Activated T-helper 2 cell treated with anti-CD3 and anti-CD28 coated beads, Interferon-gamma antibody, Interleukin-2, Interleukin-4, amounts not matched to agents 10 μg/mL and 5 μg/mL and 100 μg/mL, durations not matched to agents 14 hours and 24 hours and 36 hours (primary cell): ENCODE measurements at regions of chr4 and their contacts with region 1.

Region 1: GRCh38 chr4:56435306-56435926 is at the start of gene PPAT:
- DNase-seq: peak; percentile 97
- H3K4me3 Mint-ChIP-seq: peak within 1 kb of the TSS; percentile 98
- H3K27ac Mint-ChIP-seq: peak within 1 kb of the TSS; percentile 98
- H3K4me1 Mint-ChIP-seq: peaks cover 44% of the 10 kb centered on the region
- H3K27me3 Mint-ChIP-seq: no peaks in the 10 kb centered on the region
- total RNA-seq, gene PPAT: 43.4 and 46.2 TPM in 2 replicates

Region 2: GRCh38 chr4:56387023-56388001 is 48.1 kb before region 1 on chr4 and contains the start of gene AASDH:
- intact Hi-C with region 1: loop called (anchors 1 kb)
- DNase-seq: peak; percentile 91
- H3K4me3 Mint-ChIP-seq: peak within 1 kb of the TSS; percentile 92
- H3K27ac Mint-ChIP-seq: peak within 1 kb of the TSS; percentile 98
- H3K4me1 Mint-ChIP-seq: peaks cover 25% of the 10 kb centered on the region
- H3K27me3 Mint-ChIP-seq: no peaks in the 10 kb centered on the region
- total RNA-seq, gene AASDH: 10.4 and 15.4 TPM in 2 replicates

Region 3: DNA sequence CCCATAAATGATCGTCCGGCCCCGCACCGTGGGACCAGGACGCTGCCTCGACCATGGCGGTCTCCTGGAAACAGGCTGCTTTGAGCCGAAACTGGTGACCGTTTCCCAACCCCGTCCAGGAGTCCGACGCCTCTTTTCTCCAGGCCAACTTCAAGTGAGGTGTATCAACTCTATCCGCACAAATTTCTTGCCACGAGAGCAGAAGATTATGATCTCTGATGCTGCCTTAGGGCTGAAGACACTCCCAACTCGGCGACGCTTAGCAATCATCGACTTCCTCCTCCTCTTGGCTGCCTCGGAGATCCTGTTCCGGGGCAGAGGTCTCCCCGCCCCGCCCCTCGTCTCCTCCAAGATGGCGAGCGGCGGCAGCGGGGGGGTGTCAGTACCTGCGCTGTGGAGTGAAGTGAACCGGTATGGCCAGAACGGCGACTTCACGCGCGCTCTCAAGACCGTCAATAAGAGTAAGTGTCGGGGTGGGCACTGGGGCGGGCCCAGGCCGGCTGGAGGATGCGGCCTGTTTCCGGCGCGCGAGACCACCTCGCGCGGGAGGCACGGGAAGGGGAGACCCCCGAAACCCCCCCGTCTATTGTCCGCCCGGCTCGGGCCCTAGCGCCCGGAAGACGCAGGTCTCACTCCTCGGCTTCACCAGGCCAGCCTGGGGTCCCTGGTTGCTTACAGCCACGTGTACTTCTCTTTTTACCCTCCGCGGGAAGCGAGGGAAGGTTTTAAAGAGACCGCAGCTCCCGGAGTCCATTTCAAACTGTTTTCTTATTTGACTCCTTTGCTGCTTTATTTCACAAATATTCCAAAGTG is 32.1 kb after region 1 on chr4 and contains the start of gene SRP72:
- intact Hi-C with region 1: loop called (anchors 1 kb)
- DNase-seq: peak; percentile 87
- H3K4me3 Mint-ChIP-seq: peak within 1 kb of the TSS; percentile 100
- H3K27ac Mint-ChIP-seq: peak within 1 kb of the TSS; percentile 100
- H3K4me1 Mint-ChIP-seq: peaks cover 38% of the 10 kb centered on the region
- H3K27me3 Mint-ChIP-seq: no peaks in the 10 kb centered on the region
- total RNA-seq, gene SRP72: 187 and 191 TPM in 2 replicates

Region 4: DNA sequence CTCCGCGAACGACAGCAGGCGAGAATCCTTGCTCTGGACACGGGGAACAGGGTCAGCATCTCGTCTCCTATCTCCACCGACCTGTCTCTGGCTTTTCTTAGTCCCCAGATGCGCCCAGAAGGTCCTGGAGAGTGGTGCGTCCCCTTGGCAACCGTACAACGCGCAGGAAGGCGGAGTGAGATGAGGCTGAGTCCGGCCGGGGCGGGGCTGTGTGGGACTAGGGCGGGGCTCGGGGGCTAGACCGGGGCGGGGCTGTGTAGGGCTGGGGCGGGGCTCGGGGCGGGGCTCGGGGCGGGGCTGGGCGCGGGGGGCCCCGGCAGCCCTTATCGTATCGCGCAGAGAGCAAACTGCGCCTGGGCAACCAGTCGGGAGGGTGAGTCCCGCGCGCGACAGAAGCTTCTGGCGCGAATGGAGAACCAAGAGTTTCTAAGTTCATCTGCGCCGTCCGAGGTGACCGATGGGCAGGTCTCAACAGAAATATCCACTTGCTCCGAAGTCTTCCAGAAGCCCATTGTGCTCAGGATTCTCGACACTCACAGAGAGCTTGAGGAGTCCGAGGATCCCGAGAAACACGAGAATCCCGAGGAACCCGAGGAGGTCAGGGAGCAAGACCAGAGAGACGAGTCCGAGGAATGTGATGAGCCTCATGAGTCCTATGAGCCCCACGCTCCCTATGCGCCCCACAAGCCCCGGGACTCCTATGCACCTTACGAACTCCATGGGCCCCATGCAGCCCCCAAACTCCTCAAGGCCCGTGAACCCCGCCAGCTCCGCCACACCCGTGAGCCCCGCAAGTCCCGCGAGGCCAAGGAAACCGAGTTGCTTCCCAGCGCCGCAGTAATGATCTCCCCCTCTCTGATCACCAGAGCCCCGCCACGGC is 95.1 kb after region 1 on chr4:
- intact Hi-C with region 1: loop called (anchors 1 kb)
- DNase-seq: peak; percentile 64
- H3K4me3 Mint-ChIP-seq: no peak overlapping the region
- H3K27ac Mint-ChIP-seq: no peak overlapping the region
- H3K4me1 Mint-ChIP-seq: no peaks in the 10 kb centered on the region
- H3K27me3 Mint-ChIP-seq: peaks cover 32% of the 10 kb centered on the region

Region 5: GRCh38 chr4:56641494-56642051 is 206.2 kb after region 1 on chr4:
- intact Hi-C with region 1: no loop called
- DNase-seq: no peak
- H3K4me3 Mint-ChIP-seq: no peak overlapping the region
- H3K27ac Mint-ChIP-seq: peak overlapping the region; percentile 36
- H3K4me1 Mint-ChIP-seq: peaks cover 26% of the 10 kb centered on the region
- H3K27me3 Mint-ChIP-seq: peaks cover 1% of the 10 kb centered on the region

Region 6: GRCh38 chr4:56843421-56843899 is 408.0 kb after region 1 on chr4:
- intact Hi-C with region 1: loop called (anchors 5 kb)
- DNase-seq: no peak
- H3K4me3 Mint-ChIP-seq: no peak overlapping the region
- H3K27ac Mint-ChIP-seq: no peak overlapping the region
- H3K4me1 Mint-ChIP-seq: no peaks in the 10 kb centered on the region
- H3K27me3 Mint-ChIP-seq: peaks cover 3% of the 10 kb centered on the region

Region 7: DNA sequence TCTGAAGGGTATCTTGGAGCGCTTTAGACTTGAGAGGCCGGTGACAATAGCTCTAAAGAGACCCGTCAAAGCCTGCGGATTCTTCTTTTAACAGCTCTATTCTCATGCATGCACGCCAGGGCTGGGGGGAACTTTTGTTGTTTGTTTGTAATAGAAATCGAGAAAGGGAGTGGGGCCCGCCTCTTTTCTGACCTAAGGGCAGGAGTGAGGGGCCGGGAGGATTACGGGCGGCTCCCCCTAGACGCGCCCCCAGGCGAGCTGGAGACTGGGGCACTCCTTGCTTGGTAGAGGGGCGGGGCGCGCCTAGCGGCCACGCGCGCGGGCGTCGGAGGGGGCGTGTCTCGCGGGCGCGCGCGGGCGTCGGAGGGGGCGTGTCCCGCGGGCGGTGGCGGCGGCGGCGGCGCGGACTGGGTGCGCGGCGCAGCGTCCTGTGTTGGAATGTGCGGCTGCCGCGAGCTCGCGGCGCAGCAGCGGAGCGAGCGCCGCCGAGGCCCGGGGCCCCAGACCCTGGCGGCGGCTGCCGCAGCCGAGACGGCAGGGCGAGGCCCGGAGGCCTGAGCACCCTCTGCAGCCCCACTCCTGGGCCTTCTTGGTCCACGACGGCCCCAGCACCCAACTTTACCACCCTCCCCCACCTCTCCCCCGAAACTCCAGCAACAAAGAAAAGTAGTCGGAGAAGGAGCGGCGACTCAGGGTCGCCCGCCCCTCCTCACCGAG is 472.2 kb after region 1 on chr4 and contains the start of gene REST:
- intact Hi-C with region 1: loop called (anchors 5 kb)
- DNase-seq: peak; percentile 78
- H3K4me3 Mint-ChIP-seq: peak within 1 kb of the TSS; percentile 84
- H3K27ac Mint-ChIP-seq: peak within 1 kb of the TSS; percentile 72
- H3K4me1 Mint-ChIP-seq: peaks cover 34% of the 10 kb centered on the region
- H3K27me3 Mint-ChIP-seq: peaks cover 10% of the 10 kb centered on the region
- total RNA-seq, gene REST: 44.5 and 47.7 TPM in 2 replicates

Region 8: DNA sequence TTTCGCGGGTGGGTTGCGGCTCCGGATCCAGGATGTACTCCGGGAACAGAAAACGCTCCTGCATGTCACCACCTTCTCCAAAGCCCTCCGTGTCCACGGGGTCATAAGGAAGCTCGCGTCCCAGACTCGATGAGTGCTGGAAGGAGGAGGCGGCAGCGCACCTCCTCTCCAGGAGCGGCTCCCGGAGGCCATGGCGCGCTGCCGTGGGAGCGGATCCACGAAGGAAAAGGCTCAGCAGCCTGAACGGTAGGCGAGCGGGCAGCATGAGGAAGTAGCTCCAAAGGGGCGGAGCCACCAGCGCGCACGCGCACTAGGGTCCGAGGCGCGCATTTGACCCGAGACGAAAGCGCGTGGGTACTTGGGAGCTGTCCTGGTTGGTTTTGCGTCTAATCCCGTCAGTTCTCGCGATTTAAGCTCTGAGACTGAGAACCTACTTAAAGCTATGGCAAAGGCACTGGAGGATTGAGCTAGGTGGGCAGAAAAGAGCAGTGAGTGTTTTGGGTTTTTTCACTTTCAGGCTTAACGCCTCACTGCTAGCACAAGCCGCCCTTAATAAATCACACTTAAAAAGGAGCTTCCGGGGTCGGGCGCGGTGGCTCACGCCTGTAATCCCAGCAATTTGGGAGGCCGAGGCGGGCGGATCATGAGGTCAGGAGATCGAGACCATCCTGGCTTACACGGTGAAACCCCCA is 542.1 kb after region 1 on chr4 and contains the start of gene NOA1:
- intact Hi-C with region 1: loop called (anchors 1 kb)
- DNase-seq: peak; percentile 98
- H3K4me3 Mint-ChIP-seq: peak within 1 kb of the TSS; percentile 100
- H3K27ac Mint-ChIP-seq: peak within 1 kb of the TSS; percentile 100
- H3K4me1 Mint-ChIP-seq: peaks cover 41% of the 10 kb centered on the region
- H3K27me3 Mint-ChIP-seq: no peaks in the 10 kb centered on the region
- total RNA-seq, gene NOA1: 16.5 and 18.1 TPM in 2 replicates